Esophagus squamous epithelium (tissue), 5 donors: ENCODE measurements at regions of chr20 and their contacts with region 1.

Region 1: GRCh38 chr20:17636523-17637412 is 45.3 kb downstream of the RRBP1 start:
- DNase-seq: no peak
- H3K4me3 ChIP-seq: no peak overlapping the region
- H3K27ac ChIP-seq: peak overlapping the region in 1 of 4 donors; percentile 37
- H3K4me1 ChIP-seq: peaks cover 4 to 36% (median 26%) of the 10 kb centered on the region in 3 donors
- H3K27me3 ChIP-seq: no peaks in the 10 kb centered on the region
- CTCF ChIP-seq: no peak
- POLR2A ChIP-seq: no peak

Region 2: GRCh38 chr20:17395729-17396128 is 241.0 kb before region 1 on chr20:
- intact Hi-C with region 1: no loop called
- DNase-seq: no peak
- H3K4me3 ChIP-seq: no peak overlapping the region
- H3K27ac ChIP-seq: no peak overlapping the region
- H3K4me1 ChIP-seq: no peaks in the 10 kb centered on the region
- H3K27me3 ChIP-seq: no peaks in the 10 kb centered on the region
- CTCF ChIP-seq: no peak
- POLR2A ChIP-seq: no peak

Region 3: DNA sequence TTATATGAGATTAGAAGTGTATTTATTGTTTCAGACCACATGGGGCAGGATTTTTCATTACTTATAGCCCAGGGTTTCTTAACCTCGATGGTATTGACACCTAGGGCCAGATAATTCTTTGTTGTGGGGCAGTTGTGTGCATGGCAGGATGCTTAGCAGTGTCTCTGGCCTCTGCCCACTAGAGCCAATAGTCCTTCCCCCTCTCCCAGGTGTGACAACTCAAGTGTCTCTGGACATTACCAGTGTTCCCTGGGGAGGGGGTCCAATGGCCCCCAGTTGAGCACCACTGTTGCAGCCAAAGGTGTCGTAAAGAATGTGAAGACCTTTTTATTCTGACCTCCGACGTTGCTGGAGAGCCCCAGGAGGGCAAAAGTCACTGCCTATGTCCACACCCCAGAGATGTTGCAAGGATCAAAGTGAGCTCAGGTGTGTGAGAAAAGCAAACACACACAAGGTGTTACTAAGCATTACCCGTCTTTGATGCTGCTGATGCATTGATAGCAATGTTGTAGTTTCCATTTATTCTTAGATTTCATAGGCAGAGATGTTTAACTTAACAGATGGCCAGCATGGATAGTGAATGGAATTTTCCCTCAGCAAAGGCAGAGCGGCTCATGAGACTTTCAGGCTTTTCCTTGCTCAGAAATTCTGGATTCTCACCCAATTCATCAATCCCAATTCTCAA is 85.2 kb after region 1 on chr20:
- intact Hi-C with region 1: loop called (anchors 10 kb)
- DNase-seq: no peak
- H3K4me3 ChIP-seq: no peak overlapping the region
- H3K27ac ChIP-seq: no peak overlapping the region
- H3K4me1 ChIP-seq: no peaks in the 10 kb centered on the region
- H3K27me3 ChIP-seq: no peaks in the 10 kb centered on the region
- CTCF ChIP-seq: no peak
- POLR2A ChIP-seq: no peak